WTC11 (cell line): ENCODE measurements at regions of chr19 and their contacts with region 1.

Region 1: DNA sequence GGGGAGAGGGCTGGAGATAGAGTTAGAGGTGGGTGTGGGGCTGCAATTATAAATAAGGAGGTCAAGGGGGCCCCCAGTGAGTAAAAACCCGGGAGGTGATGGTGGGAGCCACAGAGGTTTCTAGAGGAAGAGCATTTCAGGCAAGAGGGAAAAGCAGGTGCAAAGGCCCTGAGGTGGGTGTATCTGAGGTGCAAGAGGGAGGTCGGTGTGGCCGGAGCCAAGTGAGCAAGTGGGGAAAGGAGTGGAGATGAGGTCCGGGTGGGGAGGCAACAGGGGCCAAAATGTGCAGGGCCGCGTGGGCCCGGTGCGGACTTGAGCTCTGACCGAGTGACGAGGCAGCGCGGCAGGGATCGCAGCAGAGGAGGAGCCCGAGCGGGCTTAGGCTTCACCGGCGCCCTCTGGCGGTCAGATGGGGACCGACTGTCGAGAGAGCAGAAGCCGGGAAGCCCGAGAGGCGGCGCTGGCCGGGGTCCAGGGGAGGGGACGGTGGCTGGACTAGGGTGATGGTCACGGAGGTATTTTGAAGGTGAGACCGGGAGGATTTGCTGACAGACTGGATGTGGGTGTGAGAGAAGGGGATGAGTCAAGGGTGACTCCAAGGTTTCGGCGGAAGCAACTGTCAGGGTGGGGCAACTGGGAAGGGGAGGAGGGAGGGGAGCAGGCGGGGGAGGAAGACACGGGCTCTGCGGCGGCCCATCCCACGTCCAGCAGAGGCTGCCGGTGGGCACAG is 17.7 kb upstream of the SPACA4 start:
- DNase-seq: peak; percentile 96
- ATAC-seq: peak; percentile 80
- H3K4me3 Mint-ChIP-seq: peak overlapping the region; percentile 72
- H3K27ac Mint-ChIP-seq: no peak overlapping the region
- H3K4me1 Mint-ChIP-seq: peaks cover 12% of the 10 kb centered on the region
- H3K27me3 Mint-ChIP-seq: peaks cover 30% of the 10 kb centered on the region
- CTCF ChIP-seq: peak; percentile 92

Region 2: DNA sequence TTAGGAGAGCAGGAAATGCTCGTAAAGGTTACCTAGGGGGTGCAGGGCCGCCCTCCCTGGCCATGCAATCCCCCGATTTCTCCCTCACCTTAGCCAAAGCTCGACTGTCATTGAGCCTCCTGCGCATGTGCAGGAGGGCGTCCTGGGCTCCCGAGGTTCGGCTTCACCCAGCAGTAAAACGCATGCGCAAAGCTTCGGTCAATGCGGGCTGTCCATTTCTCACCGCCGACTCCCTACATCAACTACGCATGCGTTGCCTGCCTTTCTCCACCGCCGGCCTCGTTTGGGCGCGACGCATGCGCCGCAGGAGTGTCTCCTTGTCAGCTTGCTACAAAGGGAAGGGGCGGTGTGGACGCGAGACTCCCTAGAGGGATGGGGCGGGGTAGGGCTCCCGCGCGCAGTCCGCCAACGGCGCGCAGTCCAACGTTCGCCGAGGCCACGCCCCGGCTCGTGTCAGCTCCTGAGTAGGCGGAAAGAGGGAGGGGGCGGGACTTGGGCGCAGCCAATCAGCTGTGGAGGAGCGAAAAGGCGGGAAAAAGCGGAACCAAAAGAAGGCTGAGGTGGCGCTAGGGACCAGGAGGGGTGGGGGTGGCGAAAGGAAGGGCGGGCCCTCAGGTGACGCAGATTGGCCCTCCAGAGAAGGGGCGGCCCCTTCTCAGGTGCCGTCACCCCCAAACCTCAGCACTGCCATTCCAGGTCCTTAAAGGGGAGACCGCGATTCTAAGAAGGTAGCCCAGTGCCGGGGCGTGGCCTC is 224.8 kb before region 1 on chr19 and contains the starts of genes SYNGR4 and TMEM143:
- CTCF ChIA-PET with region 1: interaction called, 12 read pairs
- POLR2A ChIA-PET with region 1: no interaction called
- DNase-seq: peak; percentile 99
- ATAC-seq: peak; percentile 87
- H3K4me3 Mint-ChIP-seq: peak within 1 kb of the TSS; percentile 81
- H3K27ac Mint-ChIP-seq: peak within 1 kb of the TSS; percentile 97
- H3K4me1 Mint-ChIP-seq: peaks cover 9% of the 10 kb centered on the region
- H3K27me3 Mint-ChIP-seq: peaks cover 18% of the 10 kb centered on the region
- CTCF ChIP-seq: no peak
- total RNA-seq, gene SYNGR4: not detected in 3 replicates
- total RNA-seq, gene TMEM143: 20.2 to 29.6 TPM (median 27.0 TPM) in 3 replicates

Region 3: GRCh38 chr19:48492925-48493717 is 95.7 kb before region 1 on chr19:
- CTCF ChIA-PET with region 1: interaction called, 122 read pairs
- POLR2A ChIA-PET with region 1: interaction called, 11 read pairs
- DNase-seq: peak; percentile 99
- ATAC-seq: peak; percentile 81
- H3K4me3 Mint-ChIP-seq: peak overlapping the region; percentile 81
- H3K27ac Mint-ChIP-seq: peak overlapping the region; percentile 98
- H3K4me1 Mint-ChIP-seq: peaks cover 29% of the 10 kb centered on the region
- H3K27me3 Mint-ChIP-seq: peaks cover 35% of the 10 kb centered on the region
- CTCF ChIP-seq: no peak

Region 4: DNA sequence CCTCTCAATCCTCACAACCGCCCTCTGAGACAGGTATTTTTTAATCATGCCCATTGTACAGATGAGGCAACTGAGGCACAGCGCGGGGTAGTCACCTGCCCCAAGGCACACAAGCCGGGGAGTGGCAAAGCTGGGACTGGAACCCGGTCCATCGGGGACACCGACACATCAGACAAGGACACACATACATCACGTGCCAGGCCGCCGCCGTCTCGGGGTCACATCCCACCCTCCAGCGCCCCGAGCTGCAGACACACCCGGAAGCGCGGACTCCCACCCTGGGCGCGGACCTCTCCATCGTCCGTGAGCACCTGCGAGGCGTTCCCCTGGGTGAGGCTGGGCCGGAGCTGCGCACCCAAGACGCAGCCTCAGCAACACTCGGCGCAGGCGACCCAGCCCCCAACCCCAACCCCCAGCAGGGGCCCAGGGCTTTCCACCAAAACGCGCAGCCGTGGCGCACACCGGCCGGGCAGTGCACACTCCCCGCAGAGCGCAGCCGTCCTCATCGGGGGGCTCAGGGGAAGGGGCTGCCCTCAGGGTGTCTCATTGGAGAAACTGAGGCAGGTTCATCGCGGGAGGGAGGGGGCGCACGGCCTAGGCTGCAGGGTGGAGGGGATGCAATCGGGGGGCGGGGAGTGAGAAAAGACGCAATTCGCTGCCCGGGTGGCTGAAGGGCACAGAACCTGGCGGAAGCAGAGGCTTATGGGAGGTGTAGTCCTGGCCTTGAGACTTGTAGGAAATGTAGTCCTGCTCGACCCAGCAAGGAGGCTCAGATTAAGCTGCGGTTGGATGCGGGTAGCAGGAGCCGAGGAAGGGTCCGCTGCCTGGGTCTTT is 75.3 kb before region 1 on chr19:
- CTCF ChIA-PET with region 1: interaction called, 297 read pairs
- POLR2A ChIA-PET with region 1: interaction called, 4 read pairs
- DNase-seq: peak; percentile 83
- ATAC-seq: peak; percentile 83
- H3K4me3 Mint-ChIP-seq: no peak overlapping the region
- H3K27ac Mint-ChIP-seq: peak overlapping the region; percentile 51; the same call in 1 of the 2 replicates
- H3K4me1 Mint-ChIP-seq: peaks cover 18% of the 10 kb centered on the region
- H3K27me3 Mint-ChIP-seq: no peaks in the 10 kb centered on the region; the same call in 1 of the 2 replicates
- CTCF ChIP-seq: no peak

Region 5: DNA sequence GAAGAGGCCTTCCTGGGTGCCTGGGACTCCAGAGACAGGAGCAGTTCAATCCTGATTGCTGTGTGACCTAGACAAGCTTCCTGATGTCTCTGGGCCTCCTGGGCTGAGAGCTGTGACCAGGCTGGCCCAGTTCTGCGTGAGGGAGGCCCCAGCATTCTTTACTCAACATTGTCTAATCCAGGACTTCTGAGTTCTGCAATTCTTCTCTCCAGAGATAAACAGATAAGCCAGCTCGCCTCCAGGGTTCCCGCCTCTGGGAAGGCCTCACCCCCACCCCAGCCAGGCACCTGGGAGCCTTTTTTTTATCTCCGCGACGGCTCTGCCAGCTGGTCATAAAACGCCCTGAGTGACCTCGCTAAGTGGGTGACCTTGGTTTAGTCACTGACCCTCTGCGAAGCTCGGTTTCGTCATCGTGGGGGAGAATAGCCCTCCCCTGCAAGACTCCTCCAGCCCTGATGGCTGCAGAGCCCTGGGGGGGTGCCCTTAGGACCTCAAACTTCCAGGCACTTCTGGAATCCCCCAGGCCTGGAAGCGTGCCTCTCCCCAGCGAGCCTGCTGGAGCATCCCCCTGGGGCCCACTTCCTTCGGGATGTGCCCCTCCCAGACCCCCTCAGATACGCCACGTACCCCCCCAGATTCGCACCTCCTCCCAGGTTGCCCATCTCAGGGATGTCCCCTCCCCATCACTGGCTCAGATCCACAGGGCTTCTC is 35.0 kb before region 1 on chr19:
- CTCF ChIA-PET with region 1: interaction called, 24 read pairs
- POLR2A ChIA-PET with region 1: interaction called, 6 read pairs
- DNase-seq: peak; percentile 51
- ATAC-seq: peak; percentile 31
- H3K4me3 Mint-ChIP-seq: peak overlapping the region; percentile 34
- H3K27ac Mint-ChIP-seq: peak overlapping the region; percentile 86
- H3K4me1 Mint-ChIP-seq: peaks cover 25% of the 10 kb centered on the region
- H3K27me3 Mint-ChIP-seq: no peaks in the 10 kb centered on the region
- CTCF ChIP-seq: no peak

Region 6: DNA sequence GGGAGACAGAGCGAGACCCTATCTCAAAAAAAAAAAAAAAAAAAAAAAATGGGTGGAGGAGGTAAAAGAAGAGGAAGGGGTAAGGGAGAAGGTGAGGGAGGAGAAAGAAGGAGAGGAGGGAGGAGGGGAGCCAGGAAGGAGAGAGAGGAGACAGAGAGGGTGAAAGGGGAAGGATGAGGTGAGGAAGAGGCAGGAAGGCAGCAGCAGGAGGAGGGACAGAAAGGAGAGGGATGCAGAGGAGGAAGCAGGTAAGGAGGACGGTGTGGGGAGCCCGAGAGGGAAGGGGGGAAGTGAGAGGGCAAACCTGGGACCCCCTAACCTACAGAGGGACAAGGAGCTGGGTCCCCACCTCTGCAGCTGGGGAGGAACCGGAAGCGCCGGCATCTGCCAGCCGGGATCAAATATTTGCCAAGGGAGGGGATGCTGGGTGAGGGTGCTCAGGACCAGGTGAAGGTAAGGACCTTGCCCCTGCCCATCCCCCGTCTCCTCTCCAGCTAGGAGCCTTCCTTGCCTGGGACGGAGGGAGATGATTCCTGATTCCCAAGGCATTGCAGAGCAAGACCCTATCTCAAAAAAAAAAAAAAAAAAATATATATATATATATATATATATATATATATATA is 13.4 kb after region 1 on chr19:
- CTCF ChIA-PET with region 1: interaction called, 68 read pairs
- POLR2A ChIA-PET with region 1: no interaction called
- DNase-seq: no peak
- ATAC-seq: no peak
- H3K4me3 Mint-ChIP-seq: no peak overlapping the region
- H3K27ac Mint-ChIP-seq: no peak overlapping the region
- H3K4me1 Mint-ChIP-seq: no peaks in the 10 kb centered on the region
- H3K27me3 Mint-ChIP-seq: no peaks in the 10 kb centered on the region; the same call in 1 of the 2 replicates
- CTCF ChIP-seq: no peak